Activated CD4-positive, alpha-beta memory T cell treated with anti-CD3 and anti-CD28 coated beads, Interleukin-2, amount 10 ng/mL, durations not matched to agents 7 days and 5 days (primary cell): ENCODE measurements at regions of chr5 and their contacts with region 1.

Region 1: DNA sequence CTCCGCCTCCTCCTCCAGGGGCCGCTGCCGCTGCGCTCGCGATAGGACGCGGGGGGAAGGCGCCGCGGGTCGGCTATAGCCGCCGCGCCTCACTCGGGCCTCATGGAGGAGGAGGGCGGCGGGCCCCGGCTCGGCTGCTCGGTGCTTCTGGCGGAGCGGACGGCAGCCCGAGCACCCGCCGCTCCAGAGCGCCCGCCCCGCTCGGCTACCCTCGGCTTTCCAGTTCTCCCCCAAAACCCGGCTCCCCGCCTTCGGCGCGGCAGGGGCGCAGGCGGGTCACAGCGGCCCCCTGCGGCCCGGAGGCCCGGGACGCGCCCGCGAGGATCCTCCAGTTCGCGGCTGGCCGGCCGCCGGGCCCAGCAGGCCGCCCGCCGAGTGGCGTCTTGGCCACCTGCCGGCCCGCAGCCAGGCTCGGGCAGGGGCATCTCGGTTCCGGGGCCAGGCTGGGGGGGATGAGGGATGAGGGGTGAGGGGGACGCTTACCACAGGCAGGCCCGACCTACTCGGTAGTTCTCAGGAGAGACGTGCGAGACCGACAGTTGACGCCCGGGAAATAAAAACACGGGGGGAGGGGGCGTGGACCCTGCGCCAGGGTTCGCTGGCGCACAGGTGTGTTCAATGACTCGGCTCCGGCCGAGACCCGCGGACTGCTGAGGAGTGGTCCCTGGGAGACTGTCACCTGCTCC is at the start of gene PAIP1:
- DNase-seq: peak; percentile 87
- H3K4me3 Mint-ChIP-seq: peak within 1 kb of the TSS; percentile 86
- H3K27ac Mint-ChIP-seq: peak within 1 kb of the TSS; percentile 87
- H3K4me1 Mint-ChIP-seq: peaks cover 14% of the 10 kb centered on the region
- H3K27me3 Mint-ChIP-seq: peaks cover 7% of the 10 kb centered on the region
- total RNA-seq, gene PAIP1: 37.0 to 38.8 TPM

Region 2: DNA sequence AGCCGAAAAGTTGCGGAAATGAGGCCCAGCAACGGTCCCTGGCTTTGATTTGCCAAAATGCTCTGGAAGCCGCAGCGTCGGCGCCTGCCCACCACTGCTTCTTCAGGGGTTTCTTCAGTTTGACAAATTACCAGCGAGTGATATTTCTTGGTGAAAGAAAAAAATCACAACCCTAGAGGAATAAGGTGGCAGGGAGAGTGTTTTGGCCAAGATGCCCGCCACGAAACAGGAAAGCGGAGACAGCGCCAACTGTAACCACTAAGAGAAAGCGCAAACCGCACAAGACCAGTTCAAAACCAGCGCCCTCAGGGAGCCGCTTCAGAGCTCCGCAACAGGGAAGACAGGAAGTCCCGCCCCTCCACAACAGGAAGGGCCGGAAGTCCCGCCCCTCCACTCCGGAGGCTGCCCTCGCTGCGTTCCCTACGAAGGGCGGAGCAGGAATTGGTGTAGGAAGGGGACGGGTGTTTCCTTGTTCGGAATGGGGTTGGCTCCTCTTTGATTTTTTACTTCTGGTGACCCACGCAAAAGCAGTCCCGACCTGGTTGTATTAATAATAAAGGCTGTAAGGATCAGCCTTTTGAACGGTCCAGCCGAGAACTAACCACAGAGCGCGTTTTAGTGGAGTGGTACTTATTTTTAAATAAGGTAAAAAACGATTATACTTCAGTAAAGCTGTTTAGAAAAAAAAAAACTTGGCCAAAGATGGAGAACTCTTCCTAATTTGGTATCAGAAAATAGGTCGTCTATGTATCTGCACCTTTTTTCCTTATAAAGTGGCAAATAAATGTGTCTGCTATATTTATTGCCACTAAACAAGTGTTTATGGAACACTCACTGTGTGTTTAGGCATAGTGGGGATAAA is 42.0 kb before region 1 on chr5 and contains the start of gene C5orf34:
- CTCF ChIA-PET with region 1: interaction called, 6 read pairs
- POLR2A ChIA-PET with region 1: interaction called, 11 read pairs
- DNase-seq: peak; percentile 94
- H3K4me3 Mint-ChIP-seq: peak within 1 kb of the TSS; percentile 94
- H3K27ac Mint-ChIP-seq: peak within 1 kb of the TSS; percentile 97
- H3K4me1 Mint-ChIP-seq: peaks cover 37% of the 10 kb centered on the region
- H3K27me3 Mint-ChIP-seq: no peaks in the 10 kb centered on the region
- total RNA-seq, gene C5orf34: 7.7 to 8.5 TPM

Region 3: DNA sequence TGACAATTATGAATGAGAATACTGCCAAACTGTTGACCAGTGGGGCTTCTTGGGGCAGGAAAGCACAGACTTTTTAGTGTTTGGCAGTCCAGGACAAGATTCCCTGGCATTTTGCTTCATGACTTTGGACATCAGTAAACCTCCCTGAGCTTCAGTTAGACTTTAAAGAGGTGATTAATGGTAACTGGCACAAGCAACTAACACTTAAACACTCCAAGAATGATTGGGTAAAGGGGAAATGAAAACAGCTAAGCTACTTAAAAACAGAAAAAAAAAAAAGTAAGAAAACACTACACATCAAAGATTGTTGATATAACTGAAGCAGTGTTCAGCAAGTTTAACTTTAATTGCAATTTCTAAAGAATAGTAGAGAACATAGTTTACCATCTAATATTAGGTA is 13.6 kb before region 1 on chr5:
- CTCF ChIA-PET with region 1: interaction called, 3 read pairs
- POLR2A ChIA-PET with region 1: interaction called, 11 read pairs
- DNase-seq: no peak
- H3K4me3 Mint-ChIP-seq: no peak overlapping the region
- H3K27ac Mint-ChIP-seq: no peak overlapping the region
- H3K4me1 Mint-ChIP-seq: peaks cover 11% of the 10 kb centered on the region
- H3K27me3 Mint-ChIP-seq: no peaks in the 10 kb centered on the region

Region 4: GRCh38 chr5:43573058-43573457 is 16.1 kb after region 1 on chr5:
- CTCF ChIA-PET with region 1: no interaction called
- POLR2A ChIA-PET with region 1: no interaction called
- DNase-seq: no peak
- H3K4me3 Mint-ChIP-seq: no peak overlapping the region
- H3K27ac Mint-ChIP-seq: no peak overlapping the region
- H3K4me1 Mint-ChIP-seq: no peaks in the 10 kb centered on the region
- H3K27me3 Mint-ChIP-seq: no peaks in the 10 kb centered on the region

Region 5: GRCh38 chr5:43602461-43603343 is 45.7 kb after region 1 on chr5 and contains the start of gene NNT:
- CTCF ChIA-PET with region 1: interaction called, 11 read pairs
- POLR2A ChIA-PET with region 1: interaction called, 38 read pairs
- DNase-seq: peak; percentile 84
- H3K4me3 Mint-ChIP-seq: peak within 1 kb of the TSS; percentile 91
- H3K27ac Mint-ChIP-seq: peak within 1 kb of the TSS; percentile 84
- H3K4me1 Mint-ChIP-seq: peaks cover 41% of the 10 kb centered on the region
- H3K27me3 Mint-ChIP-seq: no peaks in the 10 kb centered on the region
- total RNA-seq, gene NNT: 96.4 to 110 TPM

Region 6: DNA sequence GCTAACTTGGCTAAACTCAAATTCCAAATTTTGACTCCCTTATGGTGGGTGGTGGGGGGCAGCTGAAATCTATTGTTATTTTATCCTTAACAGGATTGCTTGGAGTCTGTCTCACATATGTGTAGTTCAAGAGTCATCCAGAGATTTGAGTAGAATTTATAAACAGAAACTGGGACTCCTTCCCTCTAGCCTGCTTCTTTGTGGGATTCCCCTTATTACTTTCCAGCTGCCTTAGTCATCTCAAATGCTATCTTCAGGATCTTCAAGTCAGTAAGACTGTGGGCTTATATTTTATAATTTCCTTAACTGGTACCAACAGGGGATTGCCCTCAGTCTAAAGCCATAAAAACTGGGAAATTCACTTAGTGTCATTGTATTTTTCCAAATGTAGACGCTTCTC is 101.5 kb after region 1 on chr5:
- CTCF ChIA-PET with region 1: no interaction called
- POLR2A ChIA-PET with region 1: no interaction called
- DNase-seq: no peak
- H3K4me3 Mint-ChIP-seq: no peak overlapping the region
- H3K27ac Mint-ChIP-seq: no peak overlapping the region
- H3K4me1 Mint-ChIP-seq: no peaks in the 10 kb centered on the region
- H3K27me3 Mint-ChIP-seq: no peaks in the 10 kb centered on the region